Activated naive CD4-positive, alpha-beta T cell treated with anti-CD3 and anti-CD28 coated beads for 36 hours (primary cell): ENCODE measurements at regions of chr10 and their contacts with region 1.

Region 1: DNA sequence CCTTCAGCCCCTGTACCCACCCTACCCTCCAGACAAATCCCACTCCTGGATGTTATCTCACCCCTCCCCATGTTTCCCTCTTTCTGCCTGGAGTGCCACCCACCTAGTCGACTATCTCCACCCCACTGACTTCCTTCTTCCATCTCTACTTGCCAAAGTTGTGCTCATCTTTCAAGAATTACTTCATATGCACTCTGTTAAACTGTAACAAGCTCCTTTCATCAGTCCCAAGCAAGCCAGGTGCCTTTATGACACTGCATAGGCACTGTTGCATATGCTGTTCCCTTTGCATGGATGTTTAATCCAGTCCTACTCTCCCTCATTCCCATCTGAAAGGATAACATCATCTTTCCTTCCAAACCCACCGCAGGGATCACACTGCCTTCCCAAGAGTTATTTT is 8.9 kb upstream of the CDK1 start:
- DNase-seq: no peak
- H3K4me3 Mint-ChIP-seq: no peak overlapping the region
- H3K27ac Mint-ChIP-seq: no peak overlapping the region
- H3K4me1 Mint-ChIP-seq: no peaks in the 10 kb centered on the region
- H3K27me3 Mint-ChIP-seq: no peaks in the 10 kb centered on the region

Region 2: DNA sequence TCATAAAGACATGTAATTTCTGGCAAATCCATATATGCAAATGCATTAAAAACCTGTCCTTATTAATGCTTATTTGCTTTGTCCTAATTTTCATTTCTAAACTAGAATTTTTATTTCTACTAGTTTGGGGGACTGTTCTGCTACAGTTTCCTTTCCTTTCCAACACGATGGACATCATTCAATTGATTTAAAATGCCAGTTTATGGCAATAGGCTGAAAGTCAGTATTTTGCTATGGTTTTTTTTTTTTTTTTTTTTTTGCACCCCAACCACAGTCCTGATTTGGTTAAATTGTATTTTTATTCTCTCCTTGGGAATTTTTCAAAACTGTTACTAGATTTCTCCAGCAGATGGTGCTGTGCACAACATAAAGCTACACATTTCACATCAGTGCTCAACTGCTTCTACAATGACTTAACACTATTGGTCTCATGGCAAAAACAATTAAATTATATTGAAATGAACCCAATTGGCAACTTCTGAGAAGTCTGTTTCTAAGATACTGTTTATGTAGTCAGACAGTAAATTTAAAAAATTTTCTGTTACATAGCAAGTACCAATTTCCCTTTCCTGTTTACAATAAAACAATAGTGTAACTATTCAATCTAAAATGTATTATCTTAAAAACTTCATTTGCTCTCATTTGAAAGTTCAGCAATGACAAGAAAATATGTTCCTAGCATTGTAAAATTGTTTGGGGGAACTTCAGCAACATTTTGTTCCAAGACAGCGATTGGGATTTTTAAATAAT is 669.2 kb before region 1 on chr10:
- CTCF ChIA-PET with region 1: no interaction called
- intact Hi-C with region 1: loop called (anchors 2 kb)
- DNase-seq: peak; percentile 8
- H3K4me3 Mint-ChIP-seq: no peak overlapping the region
- H3K27ac Mint-ChIP-seq: no peak overlapping the region
- H3K4me1 Mint-ChIP-seq: no peaks in the 10 kb centered on the region
- H3K27me3 Mint-ChIP-seq: no peaks in the 10 kb centered on the region

Region 3: GRCh38 chr10:60444494-60445064 is 324.8 kb before region 1 on chr10:
- CTCF ChIA-PET with region 1: interaction called, 4 read pairs
- intact Hi-C with region 1: loop called (anchors 1 kb)
- DNase-seq: no peak
- H3K4me3 Mint-ChIP-seq: no peak overlapping the region
- H3K27ac Mint-ChIP-seq: no peak overlapping the region
- H3K4me1 Mint-ChIP-seq: peaks cover 12% of the 10 kb centered on the region
- H3K27me3 Mint-ChIP-seq: no peaks in the 10 kb centered on the region

Region 4: GRCh38 chr10:60549686-60550085 is 219.7 kb before region 1 on chr10:
- CTCF ChIA-PET with region 1: interaction called, 4 read pairs
- intact Hi-C with region 1: loop called (anchors 1 kb)
- DNase-seq: no peak
- H3K4me3 Mint-ChIP-seq: no peak overlapping the region
- H3K27ac Mint-ChIP-seq: no peak overlapping the region
- H3K4me1 Mint-ChIP-seq: peaks cover 1% of the 10 kb centered on the region
- H3K27me3 Mint-ChIP-seq: no peaks in the 10 kb centered on the region

Region 5: GRCh38 chr10:60733189-60733822 is 36.1 kb before region 1 on chr10:
- CTCF ChIA-PET with region 1: interaction called, 5 read pairs
- intact Hi-C with region 1: loop called (anchors 2 kb)
- DNase-seq: peak; percentile 39
- H3K4me3 Mint-ChIP-seq: peak overlapping the region; percentile 84
- H3K27ac Mint-ChIP-seq: no peak overlapping the region
- H3K4me1 Mint-ChIP-seq: peaks cover 32% of the 10 kb centered on the region
- H3K27me3 Mint-ChIP-seq: peaks cover 4% of the 10 kb centered on the region